PC-3 (cell line): ENCODE measurements at regions of chr10 and their contacts with region 1.

Region 1: GRCh38 chr10:54284526-54285193 is 516.4 kb downstream of the PCDH15 start:
- DNase-seq: peak; percentile 72
- ATAC-seq: peak; percentile 87
- H3K4me3 ChIP-seq: no peak overlapping the region
- H3K27ac ChIP-seq: no peak overlapping the region
- H3K4me1 ChIP-seq: no peaks in the 10 kb centered on the region
- H3K27me3 ChIP-seq: no peaks in the 10 kb centered on the region
- CTCF ChIP-seq: no peak

Region 2: GRCh38 chr10:53930648-53931047 is 354.0 kb before region 1 on chr10:
- CTCF ChIA-PET with region 1: no interaction called
- POLR2A ChIA-PET with region 1: no interaction called
- intact Hi-C with region 1: no loop called
- DNase-seq: no peak
- ATAC-seq: no peak
- H3K4me3 ChIP-seq: no peak overlapping the region
- H3K27ac ChIP-seq: no peak overlapping the region
- H3K4me1 ChIP-seq: no peaks in the 10 kb centered on the region
- H3K27me3 ChIP-seq: no peaks in the 10 kb centered on the region
- CTCF ChIP-seq: no peak

Region 3: DNA sequence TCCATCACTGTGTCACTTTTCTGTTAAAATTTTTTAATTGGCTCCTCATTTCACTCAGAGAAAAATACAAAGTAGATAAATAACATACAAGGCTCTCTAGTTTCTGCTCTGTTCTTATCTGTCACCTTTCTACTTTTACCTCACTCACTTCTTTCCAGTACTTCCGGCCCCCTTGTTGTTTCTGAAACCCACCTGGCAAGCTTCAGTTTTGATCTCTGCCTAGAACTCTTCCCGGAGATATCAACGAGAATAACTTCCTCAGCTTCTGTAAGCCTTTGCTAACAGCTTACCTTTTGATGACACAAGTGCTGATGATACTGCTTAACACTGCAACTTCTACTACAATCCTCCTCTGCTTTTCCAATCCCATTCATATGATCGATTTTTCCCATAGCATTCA is 49.8 kb before region 1 on chr10:
- CTCF ChIA-PET with region 1: no interaction called
- POLR2A ChIA-PET with region 1: no interaction called
- intact Hi-C with region 1: no loop called
- DNase-seq: no peak
- ATAC-seq: no peak
- H3K4me3 ChIP-seq: no peak overlapping the region
- H3K27ac ChIP-seq: no peak overlapping the region
- H3K4me1 ChIP-seq: no peaks in the 10 kb centered on the region
- H3K27me3 ChIP-seq: no peaks in the 10 kb centered on the region
- CTCF ChIP-seq: no peak

Region 4: GRCh38 chr10:54262726-54263125 is 21.9 kb before region 1 on chr10:
- CTCF ChIA-PET with region 1: no interaction called
- POLR2A ChIA-PET with region 1: no interaction called
- intact Hi-C with region 1: loop called (anchors 1 kb)
- DNase-seq: no peak
- ATAC-seq: no peak
- H3K4me3 ChIP-seq: no peak overlapping the region
- H3K27ac ChIP-seq: no peak overlapping the region
- H3K4me1 ChIP-seq: no peaks in the 10 kb centered on the region
- H3K27me3 ChIP-seq: no peaks in the 10 kb centered on the region
- CTCF ChIP-seq: no peak

Region 5: GRCh38 chr10:54363390-54363789 is 78.7 kb after region 1 on chr10:
- CTCF ChIA-PET with region 1: no interaction called
- POLR2A ChIA-PET with region 1: no interaction called
- intact Hi-C with region 1: no loop called
- DNase-seq: no peak
- ATAC-seq: peak; percentile 57
- H3K4me3 ChIP-seq: no peak overlapping the region
- H3K27ac ChIP-seq: no peak overlapping the region
- H3K4me1 ChIP-seq: 0 out of 2 replicates have a peak, but pooled peaks cover 3% of the 10 kb centered on the region
- H3K27me3 ChIP-seq: no peaks in the 10 kb centered on the region
- CTCF ChIP-seq: no peak

Region 6: DNA sequence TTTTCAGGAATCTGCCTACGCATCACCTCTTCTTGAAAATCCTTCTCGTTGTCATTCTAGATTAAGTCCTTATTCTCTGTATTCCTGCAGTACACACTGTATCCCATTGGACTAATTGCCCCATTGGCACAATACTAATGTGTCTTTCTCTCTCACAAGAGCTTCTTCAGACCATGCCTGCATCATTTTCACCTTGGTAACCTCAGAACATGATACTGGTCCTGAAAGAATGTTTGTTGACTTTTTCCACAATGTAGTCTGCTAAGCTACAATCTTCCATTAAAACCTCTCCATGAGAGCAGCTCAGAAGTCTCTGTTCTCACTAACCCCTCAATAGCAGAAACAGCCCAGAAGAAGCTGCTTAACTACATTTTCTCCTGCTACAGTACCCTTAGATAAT is 245.6 kb after region 1 on chr10:
- CTCF ChIA-PET with region 1: no interaction called
- POLR2A ChIA-PET with region 1: no interaction called
- intact Hi-C with region 1: no loop called
- DNase-seq: no peak
- ATAC-seq: no peak
- H3K4me3 ChIP-seq: no peak overlapping the region
- H3K27ac ChIP-seq: no peak overlapping the region
- H3K4me1 ChIP-seq: no peaks in the 10 kb centered on the region
- H3K27me3 ChIP-seq: no peaks in the 10 kb centered on the region
- CTCF ChIP-seq: no peak